Activated CD8-positive, alpha-beta T cell treated with anti-CD3 and anti-CD28 coated beads for 36 hours (primary cell): ENCODE measurements at regions of chr9 and their contacts with region 1.

Region 1: DNA sequence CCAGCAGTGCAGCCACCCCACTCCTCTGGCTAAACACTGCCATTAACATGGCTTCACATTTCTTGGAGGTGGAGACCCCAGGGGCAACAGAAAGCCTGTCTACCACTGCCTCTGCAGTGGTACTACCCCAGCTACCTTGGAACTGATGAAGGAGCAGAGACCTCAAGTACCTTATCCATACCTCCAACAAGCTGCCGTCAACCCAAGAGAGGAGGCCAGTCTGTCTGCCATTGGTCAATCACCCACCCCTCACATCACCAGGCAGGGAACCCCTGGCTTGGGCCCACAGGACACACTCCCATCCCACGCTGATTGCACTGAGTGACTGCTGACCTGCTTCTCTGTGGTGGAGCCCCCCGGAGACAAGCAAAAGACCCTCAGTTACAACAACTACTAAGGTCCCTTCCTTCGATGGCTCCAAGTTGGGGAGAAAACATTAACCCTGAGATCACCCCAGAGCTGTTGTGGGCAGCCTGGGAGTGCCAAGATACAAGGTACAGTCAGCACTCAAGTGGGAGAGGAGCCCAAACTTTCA is 5.6 kb downstream of the IFNA14 start:
- DNase-seq: no peak
- ATAC-seq: no peak
- H3K4me3 Mint-ChIP-seq: no peak overlapping the region
- H3K27ac Mint-ChIP-seq: no peak overlapping the region
- H3K4me1 Mint-ChIP-seq: peaks cover 7% of the 10 kb centered on the region
- H3K27me3 Mint-ChIP-seq: peaks cover 3% of the 10 kb centered on the region
- CTCF ChIP-seq: no peak

Region 2: GRCh38 chr9:21096172-21096900 is 137.9 kb before region 1 on chr9:
- CTCF ChIA-PET with region 1: no interaction called
- POLR2A ChIA-PET with region 1: no interaction called
- intact Hi-C with region 1: no loop called
- DNase-seq: peak; percentile 59
- ATAC-seq: peak; percentile 95
- H3K4me3 Mint-ChIP-seq: peak overlapping the region; percentile 75
- H3K27ac Mint-ChIP-seq: peak overlapping the region; percentile 93
- H3K4me1 Mint-ChIP-seq: peaks cover 40% of the 10 kb centered on the region
- H3K27me3 Mint-ChIP-seq: no peaks in the 10 kb centered on the region
- CTCF ChIP-seq: no peak

Region 3: DNA sequence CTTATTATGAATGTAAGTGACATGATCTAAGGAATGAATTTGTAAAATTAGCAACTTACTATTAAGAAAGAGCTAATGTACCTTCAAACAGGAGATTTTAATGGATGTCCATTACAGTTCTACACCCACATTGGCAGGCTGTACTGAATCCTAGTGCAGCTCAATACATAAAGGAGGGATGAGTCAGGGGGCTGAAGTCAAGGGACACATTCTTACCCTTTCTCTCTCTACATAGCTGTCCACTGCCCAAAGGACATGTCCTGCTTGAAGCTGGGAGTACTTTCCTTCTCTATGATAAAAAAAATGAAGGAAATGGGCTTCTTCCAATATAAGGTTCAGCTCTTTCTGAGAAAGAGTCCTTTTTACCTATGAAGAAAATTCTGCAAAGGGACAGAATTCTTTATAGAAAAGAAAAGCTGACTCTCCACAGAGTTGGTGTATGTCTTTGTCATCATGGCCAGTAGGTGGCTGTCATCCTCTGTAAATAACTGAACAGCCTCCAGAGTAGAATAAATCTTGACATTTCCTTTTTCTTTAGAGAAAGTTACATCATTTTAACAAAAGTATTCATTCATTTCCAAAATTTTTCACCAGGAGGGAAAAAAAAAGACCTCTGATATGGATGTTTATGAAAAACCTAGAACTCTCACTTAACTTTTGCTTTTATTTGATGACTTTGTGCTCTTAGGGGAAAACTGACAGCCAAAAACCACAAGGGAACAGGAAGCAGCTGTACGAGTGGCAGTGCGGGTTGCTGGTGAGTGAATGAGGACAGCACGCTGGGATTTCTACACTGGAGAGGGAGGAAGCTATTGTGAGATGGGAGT is 18.7 kb after region 1 on chr9:
- CTCF ChIA-PET with region 1: interaction called, 37 read pairs
- POLR2A ChIA-PET with region 1: no interaction called
- intact Hi-C with region 1: no loop called
- DNase-seq: peak; percentile 37
- ATAC-seq: peak; percentile 67
- H3K4me3 Mint-ChIP-seq: no peak overlapping the region
- H3K27ac Mint-ChIP-seq: no peak overlapping the region
- H3K4me1 Mint-ChIP-seq: peaks cover 5% of the 10 kb centered on the region
- H3K27me3 Mint-ChIP-seq: peaks cover 3% of the 10 kb centered on the region
- CTCF ChIP-seq: peak; percentile 56

Region 4: GRCh38 chr9:21317956-21318923 is 84.0 kb after region 1 on chr9:
- CTCF ChIA-PET with region 1: interaction called, 14 read pairs
- POLR2A ChIA-PET with region 1: no interaction called
- intact Hi-C with region 1: loop called (anchors 10 kb)
- DNase-seq: peak; percentile 61
- ATAC-seq: peak; percentile 76
- H3K4me3 Mint-ChIP-seq: no peak overlapping the region
- H3K27ac Mint-ChIP-seq: no peak overlapping the region
- H3K4me1 Mint-ChIP-seq: peaks cover 14% of the 10 kb centered on the region
- H3K27me3 Mint-ChIP-seq: no peaks in the 10 kb centered on the region
- CTCF ChIP-seq: peak; percentile 75